CD4-positive, alpha-beta memory T cell (primary cell): ENCODE measurements at regions of chr7 and their contacts with region 1.

Region 1: DNA sequence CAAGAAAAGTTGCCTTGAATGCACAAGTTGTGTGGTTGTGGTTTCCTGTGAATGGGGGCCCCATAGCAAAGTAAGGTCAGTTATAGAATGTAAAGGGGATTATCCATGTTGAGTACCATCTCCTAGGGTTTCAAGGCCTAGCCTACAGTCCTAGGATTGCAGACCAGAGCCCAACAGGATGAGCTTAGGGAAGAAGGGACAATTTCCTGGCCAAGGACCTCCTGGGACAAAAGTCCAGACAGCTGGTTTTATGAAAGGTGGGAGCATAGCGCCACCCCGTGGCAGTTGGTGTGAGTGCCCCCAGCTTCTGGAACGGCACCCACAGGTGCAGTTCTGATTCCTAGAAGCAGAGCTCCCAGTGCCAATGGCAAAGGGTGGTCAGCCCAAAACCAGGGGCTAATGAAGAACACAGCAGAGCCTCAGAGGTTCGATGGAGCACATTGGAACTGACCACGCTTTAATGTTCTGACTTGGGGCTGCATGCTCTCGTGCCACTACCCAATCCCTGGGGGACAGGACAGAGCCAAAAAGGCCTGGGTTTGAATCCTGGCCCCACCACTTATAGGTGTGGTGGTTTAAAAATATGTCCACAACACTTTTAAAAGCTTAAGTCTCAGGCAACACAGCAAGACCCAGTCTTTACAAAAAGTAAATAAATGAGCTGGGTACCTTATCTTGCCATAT is 25.8 kb upstream of the TMEM120A start:
- DNase-seq: peak; percentile 56 to 70 (median 60)
- H3K4me3 ChIP-seq: no peak overlapping the region
- H3K4me3 Mint-ChIP-seq: no peak overlapping the region
- H3K27ac ChIP-seq: no peak overlapping the region
- H3K27ac Mint-ChIP-seq: peak overlapping the region in 3 of 7 donors; percentile 30 to 59 (median 53)
- H3K4me1 ChIP-seq: peaks cover 12% of the 10 kb centered on the region
- H3K4me1 Mint-ChIP-seq: peaks cover 7 to 14% (median 10%) of the 10 kb centered on the region in 4 donors
- H3K27me3 ChIP-seq: no peaks in the 10 kb centered on the region
- H3K27me3 Mint-ChIP-seq: no peaks in the 10 kb centered on the region

Region 2: GRCh38 chr7:75072978-75073282 is 947.2 kb before region 1 on chr7:
- CTCF ChIA-PET with region 1: no interaction called
- POLR2A ChIA-PET with region 1: no interaction called
- intact Hi-C with region 1: loop called (anchors 10 kb)
- DNase-seq: no peak
- H3K4me3 ChIP-seq: peak overlapping the region; percentile 47 to 67
- H3K4me3 Mint-ChIP-seq: peak overlapping the region; percentile 91 to 95 (median 92)
- H3K27ac ChIP-seq: peak overlapping the region; percentile 83
- H3K27ac Mint-ChIP-seq: peak overlapping the region; percentile 83 to 98 (median 95)
- H3K4me1 ChIP-seq: no peaks in the 10 kb centered on the region
- H3K4me1 Mint-ChIP-seq: peaks cover 5 to 16% (median 9%) of the 10 kb centered on the region in 4 donors
- H3K27me3 ChIP-seq: no peaks in the 10 kb centered on the region
- H3K27me3 Mint-ChIP-seq: no peaks in the 10 kb centered on the region

Region 3: DNA sequence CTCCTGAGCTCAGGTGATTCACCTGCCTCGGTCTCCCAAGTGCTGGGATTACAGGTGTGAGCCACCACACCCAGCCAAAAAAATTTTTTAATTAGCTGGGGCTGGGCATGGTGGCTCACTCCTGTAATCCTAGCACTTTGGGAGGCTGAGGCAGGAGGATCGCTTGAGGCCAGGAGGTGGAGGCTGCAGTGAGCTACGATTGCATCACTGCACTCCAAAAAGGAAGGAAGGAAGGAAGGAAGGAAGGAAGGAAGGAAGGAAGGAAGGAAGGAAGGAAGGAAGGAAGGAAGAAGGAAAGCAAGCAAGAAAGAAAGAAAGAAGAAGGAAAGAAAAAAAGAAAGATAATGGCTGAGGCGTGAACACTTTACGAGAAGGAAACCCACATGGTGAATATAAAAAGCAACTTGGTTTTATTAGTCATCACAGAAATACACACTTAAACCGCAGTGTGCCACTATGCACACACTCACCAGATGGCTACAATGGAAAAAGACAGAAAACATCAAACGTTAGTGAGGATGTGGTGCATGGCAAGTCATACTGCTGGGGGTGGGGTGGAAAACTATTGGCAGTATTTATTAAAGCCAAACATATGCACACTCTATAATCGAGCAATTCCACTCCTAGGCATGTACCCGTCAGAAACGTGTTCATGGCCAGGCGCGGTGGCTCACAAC is 243.7 kb before region 1 on chr7:
- CTCF ChIA-PET with region 1: interaction called, 3 read pairs
- POLR2A ChIA-PET with region 1: no interaction called
- intact Hi-C with region 1: loop called (anchors 1 kb)
- DNase-seq: peak; percentile 46 to 69 (median 67)
- H3K4me3 ChIP-seq: no peak overlapping the region
- H3K4me3 Mint-ChIP-seq: peak overlapping the region in 2 of 8 donors; percentile 20 to 31
- H3K27ac ChIP-seq: no peak overlapping the region
- H3K27ac Mint-ChIP-seq: peak overlapping the region in 6 of 7 donors; percentile 10 to 78 (median 54)
- H3K4me1 ChIP-seq: peaks cover 10% of the 10 kb centered on the region
- H3K4me1 Mint-ChIP-seq: peaks cover 5 to 17% (median 11%) of the 10 kb centered on the region in 4 donors
- H3K27me3 ChIP-seq: no peaks in the 10 kb centered on the region
- H3K27me3 Mint-ChIP-seq: no peaks in the 10 kb centered on the region

Region 4: GRCh38 chr7:75866489-75867389 is 153.4 kb before region 1 on chr7:
- CTCF ChIA-PET with region 1: interaction called, 81 read pairs
- POLR2A ChIA-PET with region 1: interaction called, 8 read pairs
- intact Hi-C with region 1: no loop called
- DNase-seq: peak in 4 of 5 donors; percentile 36 to 44 (median 41)
- H3K4me3 ChIP-seq: no peak overlapping the region
- H3K4me3 Mint-ChIP-seq: no peak overlapping the region
- H3K27ac ChIP-seq: no peak overlapping the region
- H3K27ac Mint-ChIP-seq: no peak overlapping the region
- H3K4me1 ChIP-seq: no peaks in the 10 kb centered on the region
- H3K4me1 Mint-ChIP-seq: peaks cover 5 to 10% (median 8%) of the 10 kb centered on the region in 4 donors
- H3K27me3 ChIP-seq: no peaks in the 10 kb centered on the region
- H3K27me3 Mint-ChIP-seq: peaks cover 7 to 12% of the 10 kb centered on the region in 2 donors

Region 5: GRCh38 chr7:75885036-75885435 is 135.1 kb before region 1 on chr7:
- CTCF ChIA-PET with region 1: interaction called, 12 read pairs
- POLR2A ChIA-PET with region 1: no interaction called
- intact Hi-C with region 1: no loop called
- DNase-seq: no peak
- H3K4me3 ChIP-seq: no peak overlapping the region
- H3K4me3 Mint-ChIP-seq: no peak overlapping the region
- H3K27ac ChIP-seq: no peak overlapping the region
- H3K27ac Mint-ChIP-seq: peak overlapping the region in 1 of 7 donors; percentile 42
- H3K4me1 ChIP-seq: peaks cover 10% of the 10 kb centered on the region
- H3K4me1 Mint-ChIP-seq: peaks cover 8 to 26% (median 17%) of the 10 kb centered on the region in 4 donors
- H3K27me3 ChIP-seq: no peaks in the 10 kb centered on the region
- H3K27me3 Mint-ChIP-seq: no peaks in the 10 kb centered on the region

Region 6: DNA sequence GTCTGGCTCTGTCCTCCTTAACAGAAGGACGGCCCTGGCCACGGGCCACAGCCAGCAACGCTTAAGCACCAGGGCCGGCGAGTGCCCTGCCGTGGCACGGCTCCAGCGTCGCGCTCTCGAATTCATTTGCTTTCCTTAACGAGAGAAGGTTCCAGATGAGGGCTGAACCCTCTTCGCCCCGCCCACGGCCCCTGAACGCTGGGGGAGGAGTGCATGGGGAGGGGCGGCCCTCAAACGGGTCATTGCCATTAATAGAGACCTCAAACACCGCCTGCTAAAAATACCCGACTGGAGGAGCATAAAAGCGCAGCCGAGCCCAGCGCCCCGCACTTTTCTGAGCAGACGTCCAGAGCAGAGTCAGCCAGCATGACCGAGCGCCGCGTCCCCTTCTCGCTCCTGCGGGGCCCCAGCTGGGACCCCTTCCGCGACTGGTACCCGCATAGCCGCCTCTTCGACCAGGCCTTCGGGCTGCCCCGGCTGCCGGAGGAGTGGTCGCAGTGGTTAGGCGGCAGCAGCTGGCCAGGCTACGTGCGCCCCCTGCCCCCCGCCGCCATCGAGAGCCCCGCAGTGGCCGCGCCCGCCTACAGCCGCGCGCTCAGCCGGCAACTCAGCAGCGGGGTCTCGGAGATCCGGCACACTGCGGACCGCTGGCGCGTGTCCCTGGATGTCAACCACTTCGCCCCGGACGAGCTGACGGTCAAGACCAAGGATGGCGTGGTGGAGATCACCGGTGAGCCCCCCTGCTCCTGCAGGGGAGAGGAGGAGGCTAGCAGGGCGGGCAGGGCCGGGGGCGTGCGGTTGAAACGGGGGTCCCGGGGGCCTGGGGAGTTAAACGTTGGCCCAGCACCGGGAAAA is 282.4 kb after region 1 on chr7 and contains the start of gene HSPB1:
- CTCF ChIA-PET with region 1: no interaction called
- POLR2A ChIA-PET with region 1: no interaction called
- intact Hi-C with region 1: no loop called
- DNase-seq: peak; percentile 61 to 82 (median 65)
- H3K4me3 ChIP-seq: peak within 1 kb of the TSS; percentile 61 to 63
- H3K4me3 Mint-ChIP-seq: peak within 1 kb of the TSS; percentile 90 to 97 (median 92)
- H3K27ac ChIP-seq: peak within 1 kb of the TSS; percentile 62
- H3K27ac Mint-ChIP-seq: peak within 1 kb of the TSS; percentile 88 to 96 (median 93)
- H3K4me1 ChIP-seq: peaks cover 6% of the 10 kb centered on the region
- H3K4me1 Mint-ChIP-seq: peaks cover 11 to 24% (median 15%) of the 10 kb centered on the region in 4 donors
- H3K27me3 ChIP-seq: no peaks in the 10 kb centered on the region
- H3K27me3 Mint-ChIP-seq: no peaks in the 10 kb centered on the region
- total RNA-seq, gene HSPB1: 41.9 to 43.1 TPM